ENCODE measurements at regions of chr3 and their contacts with region 1.

Region 1: DNA sequence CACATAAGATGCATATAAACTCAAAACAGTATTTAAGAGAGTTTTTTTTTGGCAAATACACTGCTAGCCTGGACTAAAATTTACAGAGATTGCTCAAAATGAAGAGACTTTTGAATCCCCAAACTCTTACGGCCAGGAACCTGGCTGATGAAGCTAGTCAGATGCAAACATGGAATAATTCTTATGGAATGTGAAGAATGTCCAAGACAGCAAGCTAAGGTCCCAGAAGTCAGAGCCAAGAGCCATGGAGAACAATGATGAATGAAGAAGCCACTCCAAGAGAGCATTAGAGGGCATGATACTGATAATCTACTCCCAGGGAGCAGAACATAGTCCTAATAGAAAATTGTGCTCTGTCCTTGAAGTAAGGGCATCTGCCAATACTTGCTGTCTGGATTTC is 705.5 kb downstream of the DIPK2A start:
- DNase-seq: peak; percentile 48
- H3K4me3 ChIP-seq: no peak overlapping the region
- H3K27ac ChIP-seq: no peak overlapping the region
- H3K4me1 ChIP-seq: peaks cover 2% of the 10 kb centered on the region
- H3K27me3 ChIP-seq: no peaks in the 10 kb centered on the region
- CTCF ChIP-seq: no peak
- POLR2A ChIP-seq: no peak

Region 2: GRCh38 chr3:144590854-144591253 is 86.2 kb before region 1 on chr3:
- CTCF ChIA-PET with region 1: no interaction called
- POLR2A ChIA-PET with region 1: no interaction called
- dilution Hi-C with region 1: no loop called
- intact Hi-C with region 1: loop called (anchors 5 kb)
- DNase-seq: peak; percentile 90
- H3K4me3 ChIP-seq: peak overlapping the region in 1 of 3 experiments; percentile 14
- H3K27ac ChIP-seq: peak overlapping the region; percentile 69
- H3K4me1 ChIP-seq: peaks cover 37% of the 10 kb centered on the region
- H3K27me3 ChIP-seq: no peaks in the 10 kb centered on the region
- CTCF ChIP-seq: no peak
- POLR2A ChIP-seq: no peak

Region 3: GRCh38 chr3:146093932-146094583 is 1417.0 kb after region 1 on chr3:
- CTCF ChIA-PET with region 1: no interaction called
- POLR2A ChIA-PET with region 1: no interaction called
- dilution Hi-C with region 1: no loop called
- intact Hi-C with region 1: no loop called
- DNase-seq: peak; percentile 59
- H3K4me3 ChIP-seq: no peak overlapping the region
- H3K27ac ChIP-seq: peak overlapping the region; percentile 24
- H3K4me1 ChIP-seq: peaks cover 13% of the 10 kb centered on the region
- H3K27me3 ChIP-seq: no peaks in the 10 kb centered on the region
- CTCF ChIP-seq: no peak
- POLR2A ChIP-seq: no peak

Measured in endothelial cell of umbilical vein (primary cell).